Esophagus muscularis mucosa (tissue), 4 donors: ENCODE measurements at regions of chr4 and their contacts with region 1.

Region 1: DNA sequence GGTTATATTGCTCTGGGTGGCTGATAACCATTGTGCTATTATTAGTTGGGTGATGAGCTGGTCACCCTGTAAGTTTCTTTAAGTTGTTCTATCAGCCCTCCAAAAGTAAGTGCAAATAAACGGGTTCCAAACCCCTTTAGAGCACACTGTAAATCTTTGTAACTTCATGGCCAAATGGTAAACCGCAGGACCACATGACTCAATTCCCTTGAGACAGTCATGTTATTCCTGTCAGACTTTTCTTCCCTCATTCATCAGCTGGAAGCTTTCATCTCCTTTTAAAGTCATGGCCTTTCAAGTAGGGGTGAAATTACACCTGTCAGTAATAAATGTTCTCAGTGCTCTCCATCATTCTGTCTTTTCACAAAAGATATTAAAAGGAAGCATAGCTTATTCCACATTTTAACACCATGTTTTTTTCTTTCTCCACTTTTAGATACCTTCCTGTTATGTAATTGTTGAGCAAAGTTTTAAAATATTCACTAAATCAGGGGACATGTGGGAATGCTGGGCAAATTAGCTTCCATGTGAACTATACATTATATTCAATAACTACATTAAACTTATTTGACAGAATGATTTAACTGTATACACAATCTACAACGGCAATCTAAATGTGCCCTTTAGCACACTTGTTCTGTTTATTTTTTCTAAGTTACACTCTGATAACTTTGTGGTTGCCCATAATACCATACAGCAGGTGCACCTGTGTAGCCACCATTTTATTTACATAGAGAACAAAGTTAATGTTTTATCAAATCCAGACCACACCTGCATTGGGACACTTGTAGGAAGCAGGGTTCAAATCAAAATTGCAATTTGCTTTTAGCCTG is 275.5 kb downstream of the CFAP299 start:
- DNase-seq: no peak
- H3K4me3 ChIP-seq: no peak overlapping the region
- H3K27ac ChIP-seq: no peak overlapping the region
- H3K4me1 ChIP-seq: peaks cover 0 to 9% (median 0%) of the 10 kb centered on the region in 4 donors
- H3K27me3 ChIP-seq: no peaks in the 10 kb centered on the region
- CTCF ChIP-seq: no peak
- EP300 ChIP-seq: no peak
- POLR2A ChIP-seq: no peak

Region 2: DNA sequence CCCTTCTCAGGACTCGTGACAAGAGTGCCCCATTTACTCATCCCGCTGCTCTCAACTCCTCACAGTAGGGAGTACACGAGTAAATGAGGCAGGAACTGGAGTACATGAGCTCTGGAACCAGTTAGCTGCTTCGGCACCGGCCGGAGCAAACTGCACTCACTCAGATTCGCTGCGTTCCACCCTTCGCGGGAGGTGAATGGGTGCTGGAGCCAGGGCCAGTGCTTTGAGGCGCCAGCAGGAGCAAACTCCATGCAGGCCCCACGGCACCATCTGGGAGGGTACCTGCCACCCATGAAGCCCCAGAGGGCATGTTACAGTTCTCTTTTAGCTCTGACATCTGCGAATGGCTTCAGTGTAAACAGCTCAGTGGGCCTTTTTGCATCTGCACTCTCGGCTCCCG is 887.6 kb before region 1 on chr4:
- intact Hi-C with region 1: no loop called
- DNase-seq: no peak
- H3K4me3 ChIP-seq: no peak overlapping the region
- H3K27ac ChIP-seq: no peak overlapping the region
- H3K4me1 ChIP-seq: peaks cover 0 to 18% (median 8%) of the 10 kb centered on the region in 4 donors
- H3K27me3 ChIP-seq: no peaks in the 10 kb centered on the region
- CTCF ChIP-seq: no peak
- EP300 ChIP-seq: no peak
- POLR2A ChIP-seq: no peak

Region 3: GRCh38 chr4:81040012-81040659 is 429.1 kb after region 1 on chr4:
- intact Hi-C with region 1: loop called (anchors 10 kb)
- DNase-seq: no peak
- H3K4me3 ChIP-seq: no peak overlapping the region
- H3K27ac ChIP-seq: peak overlapping the region in 2 of 4 donors; percentile 8 to 20
- H3K4me1 ChIP-seq: peaks cover 0 to 26% (median 16%) of the 10 kb centered on the region in 4 donors
- H3K27me3 ChIP-seq: no peaks in the 10 kb centered on the region
- CTCF ChIP-seq: peak; percentile 59 to 69 (median 67)
- EP300 ChIP-seq: no peak
- POLR2A ChIP-seq: no peak